ENCODE measurements at regions of chr6 and their contacts with region 1.

Region 1: GRCh38 chr6:50128420-50129005 is 78.8 kb upstream of the DEFB112 start:
- DNase-seq: no peak
- H3K4me3 ChIP-seq: no peak overlapping the region
- H3K27ac ChIP-seq: no peak overlapping the region
- H3K4me1 ChIP-seq: no peaks in the 10 kb centered on the region
- H3K27me3 ChIP-seq: no peaks in the 10 kb centered on the region
- CTCF ChIP-seq: no peak; a peak in 1 of 4 replicates
- EP300 ChIP-seq: no peak
- POLR2A ChIP-seq: no peak
- RAD21 ChIP-seq: peak in 1 of 2 experiments; percentile 47; a peak in 3 of 4 replicates

Region 2: DNA sequence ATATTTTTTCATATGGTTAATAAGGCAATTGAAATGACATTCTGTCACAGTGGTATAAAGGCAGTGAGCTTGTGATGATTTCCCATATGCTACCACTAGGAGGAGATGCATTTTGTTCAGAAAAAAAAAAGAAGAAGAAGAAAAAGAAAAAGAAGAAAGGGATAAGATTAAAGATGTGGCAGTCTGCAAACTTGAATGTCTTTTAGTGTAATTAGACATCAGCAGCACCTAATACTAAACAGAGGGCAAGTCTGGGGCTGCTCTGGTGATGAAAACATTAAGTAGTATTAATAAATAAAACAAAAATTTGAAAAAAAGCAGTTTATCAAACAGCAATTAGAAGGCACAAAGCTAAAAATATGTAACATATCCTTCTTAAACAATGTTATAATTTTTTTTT is 16.6 kb after region 1 on chr6:
- CTCF ChIA-PET with region 1: interaction called, 43 read pairs
- POLR2A ChIA-PET with region 1: no interaction called
- DNase-seq: no peak
- H3K4me3 ChIP-seq: no peak overlapping the region
- H3K27ac ChIP-seq: no peak overlapping the region
- H3K4me1 ChIP-seq: no peaks in the 10 kb centered on the region
- H3K27me3 ChIP-seq: no peaks in the 10 kb centered on the region
- CTCF ChIP-seq: peak in 1 of 3 experiments; percentile 41; a peak in 1 of 4 replicates
- EP300 ChIP-seq: no peak
- POLR2A ChIP-seq: no peak
- RAD21 ChIP-seq: no peak; a peak in 1 of 4 replicates

Measured in H1 (cell line).